PC-9 (cell line): ENCODE measurements at regions of chr17 and their contacts with region 1.

Region 1: GRCh38 chr17:1716076-1716995 is 6.2 kb upstream of the TLCD2 start:
- DNase-seq: peak; percentile 99 to 100
- H3K4me3 ChIP-seq: peak overlapping the region; percentile 81
- H3K27ac ChIP-seq: peak overlapping the region; percentile 99
- H3K4me1 ChIP-seq: peaks cover 25% of the 10 kb centered on the region
- H3K27me3 ChIP-seq: no peaks in the 10 kb centered on the region
- CTCF ChIP-seq: peak; percentile 31; the same call in 1 of the 2 replicates

Region 2: GRCh38 chr17:1488030-1488863 is 228.1 kb before region 1 on chr17:
- CTCF ChIA-PET with region 1: no interaction called
- POLR2A ChIA-PET with region 1: interaction called, 5 read pairs
- intact Hi-C with region 1: loop called (anchors 5 kb)
- DNase-seq: peak; percentile 60 to 97
- H3K4me3 ChIP-seq: peak overlapping the region; percentile 56
- H3K27ac ChIP-seq: peak overlapping the region; percentile 45
- H3K4me1 ChIP-seq: peaks cover 58% of the 10 kb centered on the region
- H3K27me3 ChIP-seq: no peaks in the 10 kb centered on the region
- CTCF ChIP-seq: no peak

Region 3: GRCh38 chr17:1648963-1649843 is 67.1 kb before region 1 on chr17:
- CTCF ChIA-PET with region 1: interaction called, 4 read pairs
- POLR2A ChIA-PET with region 1: interaction called, 18 read pairs
- intact Hi-C with region 1: loop called (anchors 1 kb)
- DNase-seq: peak; percentile 79 to 98
- H3K4me3 ChIP-seq: peak overlapping the region; percentile 79
- H3K27ac ChIP-seq: peak overlapping the region; percentile 75
- H3K4me1 ChIP-seq: peaks cover 31% of the 10 kb centered on the region
- H3K27me3 ChIP-seq: no peaks in the 10 kb centered on the region
- CTCF ChIP-seq: no peak; the same call in none of the 2 replicates

Region 4: DNA sequence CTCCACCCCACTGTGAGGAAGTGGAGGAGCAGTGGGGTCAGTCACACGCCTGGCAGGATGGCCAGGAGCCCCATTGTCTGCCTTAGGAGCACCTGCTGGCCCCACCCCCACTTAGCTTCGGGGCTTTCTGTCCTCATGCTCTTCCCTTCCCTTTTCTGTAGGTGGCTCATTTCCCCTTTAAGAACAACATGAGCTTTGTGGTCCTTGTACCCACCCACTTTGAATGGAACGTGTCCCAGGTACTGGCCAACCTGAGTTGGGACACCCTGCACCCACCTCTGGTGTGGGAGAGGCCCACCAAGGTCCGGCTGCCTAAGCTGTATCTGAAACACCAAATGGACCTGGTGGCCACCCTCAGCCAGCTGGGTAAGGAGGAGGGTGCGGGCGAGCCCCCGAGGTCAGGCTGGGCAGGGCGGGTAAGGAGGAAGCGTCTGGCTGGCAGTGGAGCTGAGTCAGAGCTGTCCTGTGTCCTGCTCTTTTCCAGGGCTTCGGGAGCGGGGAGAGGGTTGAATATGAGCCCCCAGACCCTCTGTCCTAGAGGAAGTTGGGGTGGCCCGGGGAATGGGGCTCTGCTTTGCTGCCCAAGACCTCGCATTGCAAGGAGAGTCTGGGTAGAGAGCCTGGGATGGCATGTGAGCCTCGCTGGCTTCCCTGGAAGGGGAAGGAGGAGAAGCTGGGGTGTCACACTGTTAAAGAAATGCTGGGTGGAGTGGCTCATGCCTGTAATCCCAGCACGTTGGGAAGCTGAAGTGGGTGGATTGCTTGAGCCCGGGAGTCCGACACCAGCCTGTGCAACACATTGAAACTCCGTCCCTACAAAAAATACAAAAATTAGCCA is 36.3 kb after region 1 on chr17:
- CTCF ChIA-PET with region 1: interaction called, 3 read pairs
- POLR2A ChIA-PET with region 1: interaction called, 9 read pairs
- intact Hi-C with region 1: loop called (anchors 2 kb)
- DNase-seq: peak; percentile 79 to 86
- H3K4me3 ChIP-seq: peak overlapping the region; percentile 60
- H3K27ac ChIP-seq: peak overlapping the region; percentile 67
- H3K4me1 ChIP-seq: peaks cover 28% of the 10 kb centered on the region
- H3K27me3 ChIP-seq: no peaks in the 10 kb centered on the region
- CTCF ChIP-seq: no peak; the same call in 1 of the 2 replicates

Region 5: GRCh38 chr17:1764284-1764683 is 47.9 kb after region 1 on chr17:
- CTCF ChIA-PET with region 1: no interaction called
- POLR2A ChIA-PET with region 1: no interaction called
- intact Hi-C with region 1: no loop called
- DNase-seq: no peak
- H3K4me3 ChIP-seq: no peak overlapping the region
- H3K27ac ChIP-seq: no peak overlapping the region
- H3K4me1 ChIP-seq: no peaks in the 10 kb centered on the region
- H3K27me3 ChIP-seq: no peaks in the 10 kb centered on the region
- CTCF ChIP-seq: no peak

Region 6: DNA sequence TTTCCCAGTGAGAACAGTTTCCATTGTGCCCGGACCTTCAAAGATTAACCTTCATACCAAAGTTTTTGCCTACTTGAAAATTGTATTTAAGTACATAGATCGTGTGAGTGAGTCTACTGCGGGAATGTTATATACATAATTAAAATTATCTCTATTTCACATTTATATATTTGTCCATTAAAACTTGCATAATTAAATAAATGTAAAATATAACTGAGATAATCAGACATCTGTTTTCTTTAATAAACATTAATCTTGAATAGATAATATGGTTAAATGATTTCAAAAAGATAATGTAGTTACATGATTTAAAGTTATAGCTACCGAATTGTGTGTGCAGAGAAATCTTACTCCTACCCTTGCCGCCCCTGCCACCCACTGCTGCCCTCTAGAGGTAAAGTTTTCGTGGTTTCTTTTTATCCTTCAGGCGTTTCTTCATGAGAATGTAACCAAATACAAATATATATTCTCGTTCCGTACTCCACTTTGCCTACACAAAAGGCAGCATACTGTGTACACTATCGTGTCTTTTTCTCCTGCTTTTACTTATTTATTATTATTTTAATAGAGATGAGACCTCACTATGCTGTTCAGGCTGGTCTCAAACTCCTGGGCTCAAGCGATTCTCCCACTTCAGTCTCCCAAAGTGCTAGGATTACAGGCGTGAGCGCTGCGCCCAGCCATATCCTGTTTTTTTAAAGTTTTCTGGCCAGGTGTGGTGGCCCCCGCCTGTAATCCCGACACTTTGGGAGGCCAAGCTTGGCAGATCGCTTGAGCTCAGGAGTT is 149.1 kb after region 1 on chr17:
- CTCF ChIA-PET with region 1: interaction called, 8 read pairs
- POLR2A ChIA-PET with region 1: interaction called, 4 read pairs
- intact Hi-C with region 1: loop called (anchors 2 kb)
- DNase-seq: peak in 1 of 2 experiments; percentile 54
- H3K4me3 ChIP-seq: no peak overlapping the region
- H3K27ac ChIP-seq: no peak overlapping the region
- H3K4me1 ChIP-seq: no peaks in the 10 kb centered on the region
- H3K27me3 ChIP-seq: no peaks in the 10 kb centered on the region
- CTCF ChIP-seq: peak; percentile 84

Region 7: GRCh38 chr17:2041561-2042366 is 325.4 kb after region 1 on chr17 and contains the start of gene OVCA2:
- CTCF ChIA-PET with region 1: no interaction called
- POLR2A ChIA-PET with region 1: no interaction called
- intact Hi-C with region 1: loop called (anchors 5 kb)
- DNase-seq: peak; percentile 82 to 98
- H3K4me3 ChIP-seq: peak within 1 kb of the TSS; percentile 93
- H3K27ac ChIP-seq: peak within 1 kb of the TSS; percentile 73
- H3K4me1 ChIP-seq: peaks cover 35% of the 10 kb centered on the region
- H3K27me3 ChIP-seq: no peaks in the 10 kb centered on the region
- CTCF ChIP-seq: peak; percentile 49
- total RNA-seq, gene OVCA2: 34.4 and 35.4 TPM in 2 replicates

Region 8: GRCh38 chr17:2157675-2158395 is 441.5 kb after region 1 on chr17:
- CTCF ChIA-PET with region 1: no interaction called
- POLR2A ChIA-PET with region 1: no interaction called
- intact Hi-C with region 1: no loop called
- DNase-seq: no peak
- H3K4me3 ChIP-seq: no peak overlapping the region
- H3K27ac ChIP-seq: no peak overlapping the region
- H3K4me1 ChIP-seq: no peaks in the 10 kb centered on the region
- H3K27me3 ChIP-seq: no peaks in the 10 kb centered on the region
- CTCF ChIP-seq: no peak